Activated CD4-positive, alpha-beta memory T cell treated with anti-CD3 and anti-CD28 coated beads, Interleukin-2, amount 10 ng/mL, durations not matched to agents 7 days and 5 days (primary cell): ENCODE measurements at regions of chr2 and their contacts with region 1.

Region 1: GRCh38 chr2:102240640-102241370 is 54.0 kb downstream of the IL1RL2 start:
- DNase-seq: peak; percentile 89
- H3K4me3 Mint-ChIP-seq: no peak overlapping the region
- H3K27ac Mint-ChIP-seq: peak overlapping the region; percentile 18
- H3K4me1 Mint-ChIP-seq: peaks cover 33% of the 10 kb centered on the region
- H3K27me3 Mint-ChIP-seq: peaks cover 11% of the 10 kb centered on the region

Region 2: GRCh38 chr2:102013206-102014040 is 227.4 kb before region 1 on chr2:
- CTCF ChIA-PET with region 1: interaction called, 34 read pairs
- POLR2A ChIA-PET with region 1: interaction called, 5 read pairs
- DNase-seq: no peak
- H3K4me3 Mint-ChIP-seq: no peak overlapping the region
- H3K27ac Mint-ChIP-seq: no peak overlapping the region
- H3K4me1 Mint-ChIP-seq: peaks cover 5% of the 10 kb centered on the region
- H3K27me3 Mint-ChIP-seq: no peaks in the 10 kb centered on the region

Region 3: DNA sequence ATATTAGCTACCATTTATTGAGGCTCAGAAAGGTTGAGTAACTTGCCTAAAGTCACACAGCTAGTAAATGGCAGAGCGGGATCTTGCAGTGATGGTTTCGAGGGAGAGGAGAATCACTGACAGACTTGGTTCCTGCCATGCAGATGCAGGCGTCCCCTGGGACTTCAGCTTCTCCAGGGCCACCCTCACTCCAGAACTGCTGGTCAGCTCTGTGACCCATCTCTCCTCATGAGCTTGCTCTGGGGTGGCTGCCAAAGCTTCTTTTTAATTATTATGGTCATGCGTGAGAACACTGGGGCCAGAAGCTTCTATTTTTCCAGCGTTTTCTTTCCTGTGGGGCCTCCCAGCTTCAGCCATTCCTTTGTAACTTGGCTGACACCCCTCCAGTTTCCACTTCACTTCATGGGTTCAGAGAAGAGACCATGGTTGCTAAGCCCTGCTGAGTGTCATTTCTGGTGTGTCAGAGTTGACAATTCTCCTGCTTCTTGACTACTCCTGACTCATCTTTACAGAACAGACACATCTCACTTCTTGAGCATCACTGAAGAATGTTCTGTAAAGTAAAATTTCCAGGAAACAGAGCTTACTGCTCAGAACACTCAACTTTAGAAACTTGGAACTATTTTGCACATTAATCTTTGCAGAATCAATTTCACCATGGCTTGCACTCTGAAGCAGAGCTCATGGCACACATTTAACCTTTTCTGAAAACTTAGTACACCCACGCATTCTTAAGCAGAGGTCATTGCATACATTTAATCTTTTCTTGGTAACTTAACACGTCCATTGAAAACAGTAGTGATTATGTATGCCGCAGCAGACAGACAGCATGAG is 178.6 kb before region 1 on chr2:
- CTCF ChIA-PET with region 1: interaction called, 13 read pairs
- POLR2A ChIA-PET with region 1: no interaction called
- DNase-seq: no peak
- H3K4me3 Mint-ChIP-seq: no peak overlapping the region
- H3K27ac Mint-ChIP-seq: peak overlapping the region; percentile 84
- H3K4me1 Mint-ChIP-seq: peaks cover 44% of the 10 kb centered on the region
- H3K27me3 Mint-ChIP-seq: no peaks in the 10 kb centered on the region

Region 4: GRCh38 chr2:102147935-102148334 is 92.9 kb before region 1 on chr2:
- CTCF ChIA-PET with region 1: no interaction called
- POLR2A ChIA-PET with region 1: no interaction called
- DNase-seq: peak; percentile 23
- H3K4me3 Mint-ChIP-seq: no peak overlapping the region
- H3K27ac Mint-ChIP-seq: no peak overlapping the region
- H3K4me1 Mint-ChIP-seq: peaks cover 5% of the 10 kb centered on the region
- H3K27me3 Mint-ChIP-seq: peaks cover 8% of the 10 kb centered on the region

Region 5: GRCh38 chr2:102217032-102217431 is 23.8 kb before region 1 on chr2:
- CTCF ChIA-PET with region 1: interaction called, 11 read pairs
- POLR2A ChIA-PET with region 1: no interaction called
- DNase-seq: no peak
- H3K4me3 Mint-ChIP-seq: no peak overlapping the region
- H3K27ac Mint-ChIP-seq: no peak overlapping the region
- H3K4me1 Mint-ChIP-seq: peaks cover 16% of the 10 kb centered on the region
- H3K27me3 Mint-ChIP-seq: no peaks in the 10 kb centered on the region

Region 6: DNA sequence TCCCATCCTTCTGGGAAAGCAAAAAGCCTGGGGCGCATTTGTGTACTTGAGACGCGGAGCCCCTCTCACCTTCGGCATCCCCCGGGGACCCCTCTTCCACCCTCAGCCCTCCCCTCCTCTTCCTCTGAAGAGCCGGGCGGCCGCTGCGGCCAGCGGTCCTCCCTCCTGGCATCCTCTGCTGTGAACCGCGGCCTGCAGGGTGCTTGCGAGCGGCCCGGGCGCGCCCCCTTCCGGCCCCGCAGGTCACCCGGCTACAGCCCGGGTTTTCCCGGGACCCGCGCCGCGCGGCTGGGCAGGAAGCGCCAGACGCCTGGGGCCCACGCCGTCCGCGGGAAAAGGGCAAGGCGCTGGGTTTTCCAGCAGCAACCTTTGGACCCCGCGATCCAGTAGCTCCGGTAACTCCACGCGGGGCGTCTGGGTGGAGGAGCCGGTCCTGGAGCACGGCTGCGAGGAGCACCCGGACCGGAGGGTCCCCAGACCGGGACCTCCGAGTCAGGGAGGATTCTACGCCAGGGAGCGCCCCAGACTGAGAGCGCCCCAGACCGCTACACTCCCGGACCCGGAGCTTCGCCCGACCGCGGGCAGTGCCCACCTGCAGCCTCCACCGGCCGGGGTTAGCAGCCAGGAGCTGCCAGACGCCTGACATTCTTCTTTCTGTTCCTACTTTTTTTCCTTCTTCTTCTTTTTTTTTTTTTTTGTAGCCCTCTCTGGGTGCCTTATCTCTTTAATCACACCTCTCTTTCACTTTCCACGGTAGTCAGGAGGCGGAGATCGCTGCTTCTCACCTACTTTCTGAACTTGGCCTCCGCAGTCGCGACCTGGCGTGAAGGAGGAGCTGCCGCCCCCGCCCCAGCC is 114.9 kb after region 1 on chr2 and contains the start of gene IL18R1:
- CTCF ChIA-PET with region 1: interaction called, 22 read pairs
- POLR2A ChIA-PET with region 1: no interaction called
- DNase-seq: peak; percentile 75
- H3K4me3 Mint-ChIP-seq: peak within 1 kb of the TSS; percentile 98
- H3K27ac Mint-ChIP-seq: peak within 1 kb of the TSS; percentile 87
- H3K4me1 Mint-ChIP-seq: peaks cover 44% of the 10 kb centered on the region
- H3K27me3 Mint-ChIP-seq: no peaks in the 10 kb centered on the region
- total RNA-seq, gene IL18R1: 22.8 to 24.0 TPM